ENCODE measurements at regions of chr10 and their contacts with region 1.

Region 1: GRCh38 chr10:65142641-65143435 is 1621.6 kb downstream of the REEP3 start:
- DNase-seq: no peak
- ATAC-seq: no peak

Region 2: GRCh38 chr10:64952042-64952441 is 190.8 kb before region 1 on chr10:
- intact Hi-C with region 1: loop called (anchors 5 kb)
- DNase-seq: no peak
- ATAC-seq: no peak